ENCODE measurements at regions of chr9 and their contacts with region 1.

Region 1: DNA sequence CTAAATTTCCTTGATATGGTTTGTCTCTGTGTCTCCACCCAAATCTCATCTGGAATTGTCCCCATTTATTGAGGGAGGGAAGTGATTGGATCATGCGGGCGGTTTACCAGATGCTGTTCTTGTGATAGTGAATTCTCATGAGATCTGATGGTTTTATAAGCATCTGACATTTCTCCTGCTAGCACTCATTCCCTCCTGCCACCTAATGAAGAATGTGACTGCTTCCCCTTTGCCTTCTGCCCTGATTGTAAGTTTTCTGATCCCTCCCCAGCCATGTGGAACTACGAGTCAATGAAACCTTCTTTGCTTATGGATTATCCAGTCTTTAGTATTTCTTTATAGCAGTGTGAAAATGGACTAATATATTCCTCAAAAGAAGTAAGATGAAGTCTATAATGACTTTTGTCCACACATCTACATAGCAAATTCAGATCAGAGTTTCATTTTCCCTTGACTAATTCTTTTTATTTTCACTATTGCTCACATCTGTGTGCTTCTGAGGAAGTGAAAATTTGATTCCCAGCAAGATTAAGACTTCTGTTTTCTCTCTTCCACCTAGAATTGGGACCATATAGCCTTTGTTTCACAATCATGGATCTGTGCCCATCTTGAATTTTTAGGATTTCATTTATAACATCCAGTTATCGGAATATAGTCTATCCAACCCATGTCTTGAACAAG is 393.5 kb downstream of the DMAC1 start:
- DNase-seq: no peak
- ATAC-seq: peak in 1 of 8 donors; percentile 17
- H3K4me3 ChIP-seq: no peak overlapping the region
- H3K27ac ChIP-seq: peak overlapping the region in 1 of 10 donors; percentile 41
- H3K4me1 ChIP-seq: peaks cover 0 to 28% (median 11%) of the 10 kb centered on the region in 9 donors
- H3K27me3 ChIP-seq: no peaks in the 10 kb centered on the region
- CTCF ChIP-seq: no peak

Region 2: GRCh38 chr9:7542693-7543092 is 136.6 kb after region 1 on chr9:
- intact Hi-C with region 1: loop called in 4 of 10 experiments (anchors 5 to 10 kb)
- DNase-seq: no peak
- ATAC-seq: no peak
- H3K4me3 ChIP-seq: no peak overlapping the region
- H3K27ac ChIP-seq: no peak overlapping the region
- H3K4me1 ChIP-seq: no peaks in the 10 kb centered on the region
- H3K27me3 ChIP-seq: peaks cover 0 to 3% (median 0%) of the 10 kb centered on the region in 7 donors
- CTCF ChIP-seq: no peak

Measured in heart right ventricle (tissue), 16 donors.